ENCODE measurements at regions of chr6 and their contacts with region 1.

Region 1: GRCh38 chr6:35719830-35720733 is 16.8 kb upstream of the ARMC12 start:
- DNase-seq: peak; percentile 84
- ATAC-seq: peak; percentile 73
- H3K4me3 ChIP-seq: peak overlapping the region in 4 of 5 experiments; percentile 21 to 49 (median 32)
- H3K4me3 Mint-ChIP-seq: peak overlapping the region; percentile 84
- H3K27ac ChIP-seq: peak overlapping the region; percentile 80 to 84
- H3K27ac Mint-ChIP-seq: peak overlapping the region; percentile 87
- H3K4me1 ChIP-seq: peaks cover 39 to 49% of the 10 kb centered on the region in 2 donors
- H3K4me1 Mint-ChIP-seq: peaks cover 49% of the 10 kb centered on the region
- H3K27me3 ChIP-seq: peaks cover 0 to 1% (median 0%) of the 10 kb centered on the region in 4 experiments
- H3K27me3 Mint-ChIP-seq: no peaks in the 10 kb centered on the region
- CTCF ChIP-seq: no peak

Region 2: GRCh38 chr6:35669451-35670045 is 50.5 kb before region 1 on chr6:
- CTCF ChIA-PET with region 1: no interaction called
- POLR2A ChIA-PET with region 1: no interaction called
- intact Hi-C with region 1: loop called (anchors 5 kb)
- DNase-seq: peak; percentile 41
- ATAC-seq: no peak
- H3K4me3 ChIP-seq: peak overlapping the region in 4 of 5 experiments; percentile 5 to 51 (median 22)
- H3K4me3 Mint-ChIP-seq: peak overlapping the region; percentile 80
- H3K27ac ChIP-seq: peak overlapping the region; percentile 9 to 66
- H3K27ac Mint-ChIP-seq: peak overlapping the region; percentile 7
- H3K4me1 ChIP-seq: peaks cover 12 to 30% of the 10 kb centered on the region in 2 donors
- H3K4me1 Mint-ChIP-seq: peaks cover 29% of the 10 kb centered on the region
- H3K27me3 ChIP-seq: no peaks in the 10 kb centered on the region
- H3K27me3 Mint-ChIP-seq: no peaks in the 10 kb centered on the region
- CTCF ChIP-seq: no peak

Region 3: GRCh38 chr6:35688581-35689322 is 31.3 kb before region 1 on chr6 and contains the start of gene FKBP5:
- CTCF ChIA-PET with region 1: interaction called, 4 read pairs
- POLR2A ChIA-PET with region 1: no interaction called
- intact Hi-C with region 1: loop called (anchors 2 kb)
- DNase-seq: peak; percentile 91
- ATAC-seq: peak; percentile 95
- H3K4me3 ChIP-seq: peak within 1 kb of the TSS; percentile 55 to 82 (median 73)
- H3K4me3 Mint-ChIP-seq: peak within 1 kb of the TSS; percentile 97
- H3K27ac ChIP-seq: peak within 1 kb of the TSS; percentile 25 to 60
- H3K27ac Mint-ChIP-seq: peak within 1 kb of the TSS; percentile 89
- H3K4me1 ChIP-seq: peaks cover 5 to 11% of the 10 kb centered on the region in 2 donors
- H3K4me1 Mint-ChIP-seq: peaks cover 17% of the 10 kb centered on the region
- H3K27me3 ChIP-seq: no peaks in the 10 kb centered on the region
- H3K27me3 Mint-ChIP-seq: no peaks in the 10 kb centered on the region
- CTCF ChIP-seq: no peak
- total RNA-seq, gene FKBP5: 7.4 and 8.1 TPM in 2 replicates

Region 4: GRCh38 chr6:35706468-35706867 is 13.6 kb before region 1 on chr6:
- CTCF ChIA-PET with region 1: no interaction called
- POLR2A ChIA-PET with region 1: no interaction called
- intact Hi-C with region 1: no loop called
- DNase-seq: no peak
- ATAC-seq: no peak
- H3K4me3 ChIP-seq: no peak overlapping the region
- H3K4me3 Mint-ChIP-seq: no peak overlapping the region
- H3K27ac ChIP-seq: no peak overlapping the region
- H3K27ac Mint-ChIP-seq: no peak overlapping the region
- H3K4me1 ChIP-seq: no peaks in the 10 kb centered on the region
- H3K4me1 Mint-ChIP-seq: no peaks in the 10 kb centered on the region
- H3K27me3 ChIP-seq: no peaks in the 10 kb centered on the region
- H3K27me3 Mint-ChIP-seq: no peaks in the 10 kb centered on the region
- CTCF ChIP-seq: no peak

Measured in B cell (primary cell).